Activated T-helper 2 cell treated with anti-CD3 and anti-CD28 coated beads, Interferon-gamma antibody, Interleukin-2, Interleukin-4, amounts not matched to agents 10 μg/mL and 5 μg/mL and 100 μg/mL, durations not matched to agents 14 hours and 24 hours and 36 hours (primary cell): ENCODE measurements at regions of chr18 and their contacts with region 1.

Region 1: DNA sequence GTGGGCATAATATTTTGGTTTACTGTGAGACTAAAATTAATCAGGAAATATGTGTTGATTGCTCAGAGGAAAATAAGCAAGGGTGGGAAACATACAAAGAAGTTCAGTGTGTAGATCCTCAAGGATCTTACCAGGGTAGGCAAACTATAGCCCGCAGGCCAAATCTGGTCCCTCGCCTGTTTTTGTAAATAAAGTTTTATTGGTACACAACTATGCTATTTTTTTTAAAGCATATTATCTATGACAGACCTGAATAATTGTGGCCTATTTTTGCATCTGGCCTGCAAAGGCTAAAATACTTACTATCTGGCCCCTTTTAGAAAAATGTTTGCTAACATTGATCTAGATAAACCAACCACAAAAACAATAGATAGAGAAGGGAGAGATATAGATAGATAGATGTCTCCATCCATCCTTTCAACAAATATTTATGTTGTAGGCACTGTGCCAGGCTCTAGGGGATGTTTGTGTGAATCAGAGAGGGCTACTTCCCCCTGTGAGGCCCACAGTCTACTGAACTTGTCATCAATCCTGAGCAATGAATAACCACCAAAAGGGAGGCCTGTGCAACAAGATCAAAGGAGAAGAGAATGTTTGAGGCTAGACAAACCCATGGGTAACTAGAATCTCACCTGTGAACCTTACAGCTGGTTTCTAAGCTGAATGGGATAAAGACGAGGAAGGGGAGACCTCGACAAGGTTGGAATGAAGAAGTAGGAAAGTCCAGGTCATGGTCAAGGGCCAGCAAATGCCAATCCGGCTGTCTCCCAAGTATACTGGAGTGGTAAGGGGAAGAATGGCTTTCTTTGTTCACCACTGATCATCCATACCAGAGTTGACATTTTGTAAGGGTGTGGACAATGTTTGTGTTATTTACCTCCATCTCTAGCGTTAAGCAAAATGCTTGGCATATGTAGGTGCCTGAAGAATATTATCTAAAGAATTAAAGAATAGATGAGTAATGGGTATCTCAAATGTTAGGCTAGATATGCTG is 23.6 kb downstream of the ALPK2 start:
- DNase-seq: no peak
- H3K4me3 Mint-ChIP-seq: no peak overlapping the region
- H3K27ac Mint-ChIP-seq: no peak overlapping the region
- H3K4me1 Mint-ChIP-seq: peaks cover 33% of the 10 kb centered on the region
- H3K27me3 Mint-ChIP-seq: peaks cover 3% of the 10 kb centered on the region

Region 2: GRCh38 chr18:58572181-58572580 is 33.1 kb before region 1 on chr18:
- intact Hi-C with region 1: loop called (anchors 1 kb)
- DNase-seq: no peak
- H3K4me3 Mint-ChIP-seq: no peak overlapping the region
- H3K27ac Mint-ChIP-seq: peak overlapping the region; percentile 10
- H3K4me1 Mint-ChIP-seq: peaks cover 20% of the 10 kb centered on the region
- H3K27me3 Mint-ChIP-seq: peaks cover 4% of the 10 kb centered on the region

Region 3: DNA sequence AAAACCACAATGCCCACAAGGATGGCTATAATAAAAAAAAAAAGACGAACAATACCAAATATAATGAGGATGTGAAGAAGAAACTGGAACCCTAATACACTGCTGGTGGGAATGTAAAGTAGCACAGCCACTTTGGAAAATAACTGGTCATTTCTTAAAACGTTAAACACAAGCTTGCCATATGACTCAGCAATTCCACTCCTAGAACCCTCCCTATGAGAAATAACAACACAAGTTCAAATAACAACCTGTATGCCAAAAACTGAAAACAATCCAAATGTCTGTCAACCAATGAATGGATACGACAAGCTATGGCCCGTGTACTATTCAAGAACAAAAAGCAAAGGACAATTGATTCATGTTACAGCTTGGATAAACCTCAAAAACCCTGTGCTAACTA is 30.6 kb after region 1 on chr18:
- intact Hi-C with region 1: no loop called
- DNase-seq: no peak
- H3K4me3 Mint-ChIP-seq: no peak overlapping the region
- H3K27ac Mint-ChIP-seq: no peak overlapping the region
- H3K4me1 Mint-ChIP-seq: peaks cover 35% of the 10 kb centered on the region
- H3K27me3 Mint-ChIP-seq: peaks cover 8% of the 10 kb centered on the region